Activated naive CD4-positive, alpha-beta T cell treated with anti-CD3 and anti-CD28 coated beads for 36 hours (primary cell): ENCODE measurements at regions of chr2 and their contacts with region 1.

Region 1: GRCh38 chr2:171319164-171319810 is 114.5 kb downstream of the METTL8 start:
- DNase-seq: peak; percentile 85
- H3K4me3 Mint-ChIP-seq: peak overlapping the region; percentile 55
- H3K27ac Mint-ChIP-seq: peak overlapping the region; percentile 99
- H3K4me1 Mint-ChIP-seq: peaks cover 54% of the 10 kb centered on the region
- H3K27me3 Mint-ChIP-seq: no peaks in the 10 kb centered on the region

Region 2: GRCh38 chr2:170928824-170929685 is 390.2 kb before region 1 on chr2 and contains the start of gene GORASP2:
- CTCF ChIA-PET with region 1: interaction called, 3 read pairs
- intact Hi-C with region 1: loop called (anchors 1 kb)
- DNase-seq: peak; percentile 99
- H3K4me3 Mint-ChIP-seq: peak within 1 kb of the TSS; percentile 98
- H3K27ac Mint-ChIP-seq: peak within 1 kb of the TSS; percentile 96
- H3K4me1 Mint-ChIP-seq: peaks cover 39% of the 10 kb centered on the region
- H3K27me3 Mint-ChIP-seq: no peaks in the 10 kb centered on the region
- total RNA-seq, gene GORASP2: 57.1 to 60.2 TPM

Region 3: GRCh38 chr2:171095014-171095582 is 224.2 kb before region 1 on chr2:
- CTCF ChIA-PET with region 1: no interaction called
- intact Hi-C with region 1: loop called (anchors 1 kb)
- DNase-seq: no peak
- H3K4me3 Mint-ChIP-seq: no peak overlapping the region
- H3K27ac Mint-ChIP-seq: no peak overlapping the region
- H3K4me1 Mint-ChIP-seq: peaks cover 28% of the 10 kb centered on the region
- H3K27me3 Mint-ChIP-seq: no peaks in the 10 kb centered on the region

Region 4: DNA sequence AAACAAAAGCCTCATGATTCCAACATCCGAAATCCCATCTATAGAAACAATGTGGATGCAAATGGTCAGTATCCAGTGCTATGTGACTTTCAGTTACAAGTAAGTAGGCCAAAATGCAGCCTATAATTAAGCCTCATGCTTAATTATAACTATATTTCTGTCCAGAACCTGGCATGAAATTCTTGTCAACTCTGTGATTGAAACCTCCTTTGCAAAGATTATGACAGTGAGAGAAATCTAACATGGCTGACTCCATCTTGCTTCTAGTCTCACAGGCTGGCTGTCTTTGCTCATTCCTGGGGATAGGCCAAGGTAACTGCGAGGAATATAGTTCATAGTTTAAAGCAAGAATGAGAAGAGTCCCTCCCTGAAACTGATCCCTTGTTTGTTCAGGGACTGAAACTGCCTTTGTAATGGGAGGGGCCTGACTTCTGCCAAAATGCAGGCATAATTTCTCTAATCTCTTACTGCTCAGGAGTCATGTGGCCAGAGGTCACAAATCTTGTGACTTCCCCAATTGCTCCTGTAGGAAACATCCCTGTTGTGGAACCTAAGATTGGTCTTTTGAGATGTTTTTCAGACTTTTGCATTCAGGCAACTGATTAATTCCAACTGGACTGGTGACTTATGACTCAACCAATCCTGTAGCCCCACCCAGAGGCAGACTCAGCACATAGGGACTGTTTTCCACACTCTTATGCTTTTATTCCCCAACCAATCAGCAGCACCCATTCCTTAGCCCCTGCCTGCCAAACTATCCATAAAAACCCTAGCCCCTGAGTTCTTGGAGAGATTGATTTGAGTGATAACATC is 74.1 kb before region 1 on chr2:
- CTCF ChIA-PET with region 1: interaction called, 3 read pairs
- intact Hi-C with region 1: loop called (anchors 1 kb)
- DNase-seq: peak; percentile 32
- H3K4me3 Mint-ChIP-seq: no peak overlapping the region
- H3K27ac Mint-ChIP-seq: no peak overlapping the region
- H3K4me1 Mint-ChIP-seq: peaks cover 40% of the 10 kb centered on the region
- H3K27me3 Mint-ChIP-seq: no peaks in the 10 kb centered on the region

Region 5: DNA sequence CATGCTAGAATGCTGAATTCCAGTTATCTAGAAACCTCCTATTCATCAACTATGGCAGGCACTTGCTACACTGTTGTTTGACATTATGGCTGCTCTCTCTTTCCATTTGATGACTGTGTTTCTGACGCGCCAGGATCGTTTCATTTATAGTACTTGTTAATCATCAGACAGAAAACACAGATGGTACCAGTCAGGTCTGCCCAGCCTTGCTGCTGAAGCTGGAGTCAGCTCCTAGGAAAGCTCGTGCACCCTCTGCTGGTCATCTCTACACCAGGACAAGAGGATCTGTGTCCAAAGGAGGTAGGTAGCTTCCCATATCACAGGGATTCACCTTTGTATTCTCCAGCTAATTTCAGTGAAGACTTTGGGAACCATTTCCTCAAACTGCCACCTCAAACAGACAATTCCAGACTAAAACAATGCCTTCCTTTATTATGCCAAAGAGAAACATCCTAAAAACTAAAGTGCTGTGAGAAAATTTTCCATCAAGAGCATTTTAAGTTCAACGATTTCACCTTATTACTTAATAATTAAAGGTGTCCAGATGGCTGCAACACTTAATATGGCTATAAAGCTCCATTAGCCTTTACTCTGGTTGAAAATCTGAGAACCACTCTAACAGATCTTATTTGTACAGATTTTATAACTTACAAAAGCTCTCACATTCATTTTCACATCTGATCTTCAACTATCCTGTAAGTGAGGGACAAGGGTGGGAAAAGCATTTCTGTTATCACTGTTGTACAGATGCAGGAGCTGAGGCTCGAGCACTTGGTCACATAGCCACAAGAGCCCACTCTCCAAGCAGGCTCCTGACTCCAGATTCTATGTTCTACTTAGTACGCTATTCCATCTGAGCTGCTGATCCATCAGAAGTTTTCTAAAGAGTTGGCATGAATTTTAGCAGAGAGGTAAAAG is 97.0 kb after region 1 on chr2:
- CTCF ChIA-PET with region 1: interaction called, 9 read pairs
- intact Hi-C with region 1: loop called (anchors 1 kb)
- DNase-seq: peak; percentile 96
- H3K4me3 Mint-ChIP-seq: peak overlapping the region; percentile 32
- H3K27ac Mint-ChIP-seq: peak overlapping the region; percentile 92
- H3K4me1 Mint-ChIP-seq: peaks cover 38% of the 10 kb centered on the region
- H3K27me3 Mint-ChIP-seq: no peaks in the 10 kb centered on the region

Region 6: GRCh38 chr2:171824086-171824485 is 504.8 kb after region 1 on chr2:
- CTCF ChIA-PET with region 1: no interaction called
- intact Hi-C with region 1: no loop called
- DNase-seq: no peak
- H3K4me3 Mint-ChIP-seq: no peak overlapping the region
- H3K27ac Mint-ChIP-seq: no peak overlapping the region
- H3K4me1 Mint-ChIP-seq: no peaks in the 10 kb centered on the region
- H3K27me3 Mint-ChIP-seq: no peaks in the 10 kb centered on the region

Region 7: GRCh38 chr2:172253190-172254052 is 934.1 kb after region 1 on chr2:
- CTCF ChIA-PET with region 1: no interaction called
- intact Hi-C with region 1: loop called (anchors 1 kb)
- DNase-seq: peak; percentile 77
- H3K4me3 Mint-ChIP-seq: no peak overlapping the region
- H3K27ac Mint-ChIP-seq: peak overlapping the region; percentile 65
- H3K4me1 Mint-ChIP-seq: peaks cover 36% of the 10 kb centered on the region
- H3K27me3 Mint-ChIP-seq: no peaks in the 10 kb centered on the region